Esophagus squamous epithelium (tissue), 5 donors: ENCODE measurements at regions of chr12 and their contacts with region 1.

Region 1: DNA sequence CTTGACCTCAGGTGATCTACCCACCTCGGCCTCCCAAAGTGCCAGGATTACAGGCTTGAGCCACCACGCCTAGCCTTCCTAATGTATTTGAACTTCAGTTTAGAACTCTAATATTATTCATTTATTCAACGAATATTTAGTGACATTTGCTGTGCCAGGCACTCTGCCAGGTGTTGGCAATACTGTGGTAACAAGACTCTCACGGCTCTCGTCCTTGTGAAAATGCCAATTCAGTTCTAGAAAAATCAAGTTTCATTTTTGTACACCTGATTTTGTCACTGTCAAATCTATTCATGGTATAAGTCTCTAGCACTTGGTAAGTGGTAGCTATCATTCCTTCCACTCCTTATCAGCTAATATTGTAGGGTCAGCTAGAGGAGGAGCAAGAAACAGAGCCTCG is 6.3 kb upstream of the PWP1 start:
- DNase-seq: no peak
- H3K4me3 ChIP-seq: no peak overlapping the region
- H3K27ac ChIP-seq: no peak overlapping the region
- H3K4me1 ChIP-seq: peaks cover 0 to under 1% (median 0%) of the 10 kb centered on the region in 3 donors
- H3K27me3 ChIP-seq: peaks cover 0 to 40% (median 0%) of the 10 kb centered on the region in 4 donors
- CTCF ChIP-seq: no peak
- POLR2A ChIP-seq: no peak

Region 2: GRCh38 chr12:107884769-107885694 is 205.7 kb after region 1 on chr12:
- intact Hi-C with region 1: loop called (anchors 5 kb)
- DNase-seq: peak; percentile 10
- H3K4me3 ChIP-seq: no peak overlapping the region
- H3K27ac ChIP-seq: no peak overlapping the region
- H3K4me1 ChIP-seq: no peaks in the 10 kb centered on the region
- H3K27me3 ChIP-seq: peaks cover 0 to 22% (median 0%) of the 10 kb centered on the region in 4 donors
- CTCF ChIP-seq: peak; percentile 56 to 78 (median 68)
- POLR2A ChIP-seq: no peak